HCT116 (cell line): ENCODE measurements at regions of chrX and their contacts with region 1.

Region 1: DNA sequence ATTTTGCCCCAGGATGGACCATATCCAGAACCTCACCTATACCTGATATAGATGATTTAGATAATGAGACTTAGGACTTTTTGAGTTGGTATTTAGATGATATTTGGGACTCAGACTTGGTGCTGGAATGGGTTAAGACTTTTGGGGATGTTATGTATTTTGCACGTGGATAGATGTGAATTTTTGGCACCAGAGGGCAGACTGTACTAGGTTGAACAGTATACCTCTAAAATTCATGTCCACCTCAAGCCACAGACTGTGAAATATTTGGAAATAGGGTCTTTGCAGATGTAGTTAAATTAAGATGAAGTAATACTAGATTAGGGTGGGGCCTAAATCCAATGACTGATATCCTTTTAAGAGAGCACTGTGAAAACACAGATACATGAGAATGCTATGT is 15.6 kb downstream of the RBM41 start:
- DNase-seq: no peak
- ATAC-seq: 0 out of 2 replicates have a peak, but pooled peaks have one; percentile 44
- H3K4me3 ChIP-seq: no peak overlapping the region
- H3K27ac ChIP-seq: no peak overlapping the region
- H3K4me1 ChIP-seq: no peaks in the 10 kb centered on the region
- H3K27me3 ChIP-seq: no peaks in the 10 kb centered on the region
- CTCF ChIP-seq: peak; percentile 5 to 34 (median 31); a peak in 3 of 6 replicates
- POLR2A ChIP-seq: no peak
- RAD21 ChIP-seq: peak; percentile 59

Region 2: GRCh38 chrX:107290019-107290418 is 187.0 kb after region 1 on chrX:
- CTCF ChIA-PET with region 1: no interaction called
- POLR2A ChIA-PET with region 1: no interaction called
- RAD21 ChIA-PET with region 1: no interaction called
- intact Hi-C with region 1: loop called (anchors 10 kb)
- DNase-seq: no peak
- ATAC-seq: no peak
- H3K4me3 ChIP-seq: no peak overlapping the region
- H3K27ac ChIP-seq: no peak overlapping the region
- H3K4me1 ChIP-seq: no peaks in the 10 kb centered on the region
- H3K27me3 ChIP-seq: no peaks in the 10 kb centered on the region
- CTCF ChIP-seq: peak in 1 of 3 experiments; percentile 16; a peak in 1 of 6 replicates
- POLR2A ChIP-seq: no peak
- RAD21 ChIP-seq: peak; percentile 43; the same call in 1 of the 2 replicates